Endothelial cell of umbilical vein (primary cell): ENCODE measurements at regions of chr5 and their contacts with region 1.

Region 1: GRCh38 chr5:71601222-71602041 is 14.3 kb downstream of the MCCC2 start:
- DNase-seq: peak; percentile 99
- H3K4me3 ChIP-seq: no peak overlapping the region
- H3K27ac ChIP-seq: peak overlapping the region; percentile 83
- H3K4me1 ChIP-seq: peaks cover 30% of the 10 kb centered on the region
- H3K27me3 ChIP-seq: no peaks in the 10 kb centered on the region
- CTCF ChIP-seq: peak; percentile 70 to 81
- POLR2A ChIP-seq: peak; percentile 29

Region 2: GRCh38 chr5:71475788-71476384 is 125.5 kb before region 1 on chr5:
- CTCF ChIA-PET with region 1: interaction called, 16 read pairs
- POLR2A ChIA-PET with region 1: no interaction called
- dilution Hi-C with region 1: no loop called
- intact Hi-C with region 1: no loop called
- DNase-seq: peak; percentile 39
- H3K4me3 ChIP-seq: no peak overlapping the region
- H3K27ac ChIP-seq: no peak overlapping the region
- H3K4me1 ChIP-seq: peaks cover 6% of the 10 kb centered on the region
- H3K27me3 ChIP-seq: no peaks in the 10 kb centered on the region
- CTCF ChIP-seq: peak; percentile 65 to 72
- POLR2A ChIP-seq: no peak

Region 3: DNA sequence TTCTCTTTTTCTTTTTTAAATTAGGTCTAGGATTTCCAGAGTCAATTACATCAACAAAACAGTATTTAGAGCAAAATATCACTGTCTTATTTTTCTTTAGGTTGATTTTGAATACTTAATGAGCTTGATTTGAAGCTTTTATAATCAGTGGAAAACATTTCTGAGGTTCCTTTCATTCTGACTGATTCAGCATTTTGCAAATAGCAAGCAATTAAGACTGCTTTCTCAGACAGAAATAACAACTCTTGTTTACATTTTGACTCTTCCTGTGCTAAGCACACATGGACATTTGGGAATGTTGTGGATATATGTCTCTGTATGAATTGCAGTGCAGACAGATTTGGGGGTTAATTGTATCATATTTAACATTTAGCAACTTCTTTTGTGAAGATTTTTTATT is 36.5 kb before region 1 on chr5:
- CTCF ChIA-PET with region 1: interaction called, 12 read pairs
- POLR2A ChIA-PET with region 1: no interaction called
- dilution Hi-C with region 1: no loop called
- intact Hi-C with region 1: no loop called
- DNase-seq: no peak
- H3K4me3 ChIP-seq: no peak overlapping the region
- H3K27ac ChIP-seq: no peak overlapping the region
- H3K4me1 ChIP-seq: no peaks in the 10 kb centered on the region
- H3K27me3 ChIP-seq: no peaks in the 10 kb centered on the region
- CTCF ChIP-seq: no peak
- POLR2A ChIP-seq: no peak

Region 4: DNA sequence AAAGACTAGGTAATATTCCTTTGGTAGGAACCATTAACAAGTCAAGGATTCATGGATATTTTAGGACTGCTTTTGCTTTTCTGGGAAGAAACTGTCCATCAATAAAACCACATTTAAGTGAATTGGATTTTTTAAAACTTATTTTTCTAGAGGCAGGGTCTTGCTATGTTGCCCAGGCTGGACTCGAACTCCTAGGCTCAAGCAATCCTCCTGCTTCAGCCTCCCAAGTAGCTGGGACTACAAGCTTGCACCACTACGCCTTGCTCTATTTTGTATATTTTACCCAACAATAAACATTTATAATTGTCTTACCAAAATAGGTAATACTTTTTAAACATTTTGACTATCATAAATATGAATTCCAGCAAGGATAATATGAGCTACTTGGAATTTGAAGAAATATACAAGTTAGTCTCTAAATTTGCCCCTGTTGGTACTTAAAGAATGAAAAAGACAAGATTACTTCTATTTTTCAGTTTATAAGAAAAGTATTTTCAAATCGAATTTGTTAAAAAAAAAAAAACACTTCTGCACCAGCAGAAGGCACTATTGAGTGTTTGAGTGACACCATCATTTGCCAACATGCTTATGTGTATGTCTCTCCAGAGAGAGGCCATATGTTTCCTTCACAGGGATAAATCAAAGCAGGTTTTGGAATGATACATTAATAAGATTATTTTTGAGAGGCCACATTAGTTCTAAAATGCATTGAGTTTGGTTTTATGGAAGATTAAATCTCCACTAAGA is 57.7 kb after region 1 on chr5:
- CTCF ChIA-PET with region 1: interaction called, 4 read pairs
- POLR2A ChIA-PET with region 1: no interaction called
- dilution Hi-C with region 1: no loop called
- intact Hi-C with region 1: loop called (anchors 2 kb)
- DNase-seq: peak; percentile 41
- H3K4me3 ChIP-seq: no peak overlapping the region
- H3K27ac ChIP-seq: no peak overlapping the region
- H3K4me1 ChIP-seq: no peaks in the 10 kb centered on the region
- H3K27me3 ChIP-seq: peaks cover 2% of the 10 kb centered on the region in 2 experiments
- CTCF ChIP-seq: no peak
- POLR2A ChIP-seq: no peak

Region 5: GRCh38 chr5:71757590-71758543 is 156.4 kb after region 1 on chr5:
- CTCF ChIA-PET with region 1: interaction called, 10 read pairs
- POLR2A ChIA-PET with region 1: no interaction called
- dilution Hi-C with region 1: no loop called
- intact Hi-C with region 1: loop called (anchors 1 kb)
- DNase-seq: peak; percentile 85
- H3K4me3 ChIP-seq: no peak overlapping the region
- H3K27ac ChIP-seq: no peak overlapping the region
- H3K4me1 ChIP-seq: peaks cover 4% of the 10 kb centered on the region
- H3K27me3 ChIP-seq: peaks cover 2 to 5% of the 10 kb centered on the region in 2 experiments
- CTCF ChIP-seq: peak; percentile 81 to 84
- POLR2A ChIP-seq: no peak